Common myeloid progenitor, CD34-positive (primary cell): ENCODE measurements at regions of chr15 and their contacts with region 1.

Region 1: GRCh38 chr15:92917606-92918407 is 17.7 kb downstream of the CHD2 start:
- DNase-seq: peak; percentile 94 to 96 (median 94)
- H3K4me3 ChIP-seq: peak overlapping the region in 2 of 7 experiments; percentile 25 to 34
- H3K27ac ChIP-seq: peak overlapping the region in 1 of 2 experiments; percentile 52
- H3K4me1 ChIP-seq: peaks cover 26 to 64% (median 44%) of the 10 kb centered on the region in 4 experiments
- H3K27me3 ChIP-seq: no peaks in the 10 kb centered on the region

Region 2: GRCh38 chr15:92903941-92904831 is 13.6 kb before region 1 on chr15:
- CTCF ChIA-PET with region 1: interaction called, 12 read pairs
- POLR2A ChIA-PET with region 1: interaction called, 12 read pairs
- DNase-seq: peak; percentile 98 to 99 (median 99)
- H3K4me3 ChIP-seq: peak overlapping the region; percentile 30 to 100 (median 92)
- H3K27ac ChIP-seq: peak overlapping the region; percentile 99 to 100
- H3K4me1 ChIP-seq: peaks cover 46 to 65% (median 55%) of the 10 kb centered on the region in 4 experiments
- H3K27me3 ChIP-seq: no peaks in the 10 kb centered on the region

Region 3: GRCh38 chr15:92944946-92945521 is 27.2 kb after region 1 on chr15:
- CTCF ChIA-PET with region 1: no interaction called
- POLR2A ChIA-PET with region 1: no interaction called
- DNase-seq: no peak
- H3K4me3 ChIP-seq: no peak overlapping the region
- H3K27ac ChIP-seq: no peak overlapping the region
- H3K4me1 ChIP-seq: no peaks in the 10 kb centered on the region
- H3K27me3 ChIP-seq: no peaks in the 10 kb centered on the region